CD4-positive, alpha-beta memory T cell (primary cell): ENCODE measurements at regions of chr2 and their contacts with region 1.

Region 1: DNA sequence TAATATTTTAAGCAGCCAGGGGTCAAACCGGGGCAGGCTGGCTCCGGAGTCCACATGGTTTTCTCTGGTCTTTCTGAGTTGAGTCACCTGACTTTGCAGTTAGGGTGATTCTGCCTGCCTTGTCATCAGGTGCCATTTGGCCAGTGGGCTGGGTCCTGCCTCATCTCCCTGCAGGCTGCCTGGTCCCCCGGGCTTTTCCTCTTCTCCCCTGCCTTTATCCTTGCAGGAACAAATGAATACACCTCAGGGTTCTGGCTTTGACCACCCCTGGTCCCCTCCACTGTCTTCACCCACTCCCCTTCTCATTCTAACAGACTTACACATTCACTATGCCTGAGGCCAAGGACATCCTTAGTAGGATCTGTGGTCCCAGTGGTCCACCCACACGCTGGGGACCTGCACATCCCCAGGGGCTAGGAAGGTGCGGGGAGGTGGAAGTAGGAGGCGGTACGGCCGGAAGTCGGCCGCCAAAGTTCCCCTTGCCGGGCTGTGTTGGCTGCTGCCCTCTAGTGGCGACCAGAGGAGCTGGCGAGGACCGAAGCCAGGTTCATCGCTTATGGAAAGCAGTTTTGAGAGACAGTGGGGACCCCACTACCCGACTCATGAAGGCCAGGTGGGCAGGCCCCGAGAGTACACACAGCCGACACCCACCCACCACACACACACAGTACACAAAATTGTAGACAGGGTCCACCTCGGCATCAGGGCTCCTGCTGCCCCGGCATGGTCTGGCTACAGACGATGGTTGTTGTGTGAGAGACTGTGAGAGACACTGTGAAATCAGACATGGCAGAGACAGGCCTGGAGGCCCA is 6.3 kb upstream of the TEX261 start:
- DNase-seq: peak; percentile 76 to 78 (median 76)
- H3K4me3 ChIP-seq: peak overlapping the region in 1 of 2 donors; percentile 13
- H3K4me3 Mint-ChIP-seq: peak overlapping the region; percentile 23 to 75 (median 58)
- H3K27ac ChIP-seq: no peak overlapping the region
- H3K27ac Mint-ChIP-seq: peak overlapping the region in 5 of 7 donors; percentile 24 to 85 (median 66)
- H3K4me1 ChIP-seq: peaks cover 15% of the 10 kb centered on the region
- H3K4me1 Mint-ChIP-seq: peaks cover 4 to 13% (median 11%) of the 10 kb centered on the region in 4 donors
- H3K27me3 ChIP-seq: no peaks in the 10 kb centered on the region
- H3K27me3 Mint-ChIP-seq: peaks cover 1 to 2% of the 10 kb centered on the region in 2 donors

Region 2: DNA sequence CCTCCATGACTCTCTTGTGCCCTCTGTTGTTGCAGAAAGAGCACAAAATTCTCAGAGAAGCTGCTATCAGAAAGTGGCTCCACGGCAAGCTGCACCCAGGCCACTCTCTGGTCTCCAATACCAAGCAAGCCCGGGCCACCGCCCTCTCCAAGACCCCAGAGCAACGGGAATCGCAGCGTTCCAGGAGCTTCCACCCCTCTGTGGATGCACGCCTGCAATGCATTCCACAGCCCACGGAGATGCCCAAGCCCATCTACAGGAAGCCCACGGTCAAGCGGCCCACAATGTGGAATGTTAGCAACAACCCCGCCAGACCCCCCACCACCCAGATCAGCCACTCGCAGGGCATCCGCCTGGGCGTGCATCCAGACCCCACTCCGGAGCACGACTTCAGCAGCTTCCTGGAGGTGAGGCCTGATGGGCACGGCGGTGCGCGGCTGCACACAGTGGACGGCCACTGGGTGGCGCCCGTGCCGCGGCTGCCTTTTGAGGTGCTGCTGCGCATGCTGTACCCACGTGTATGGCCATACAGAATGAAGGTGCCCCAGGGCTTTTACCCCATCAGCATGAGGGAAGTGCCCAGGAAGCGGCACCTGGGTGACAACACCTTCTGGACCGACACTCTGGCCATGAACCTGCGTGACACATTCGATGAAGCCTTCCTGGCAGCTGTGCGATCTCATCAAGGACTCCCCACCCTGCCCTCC is 16.3 kb before region 1 on chr2:
- CTCF ChIA-PET with region 1: interaction called, 75 read pairs
- POLR2A ChIA-PET with region 1: interaction called, 6 read pairs
- intact Hi-C with region 1: loop called (anchors 2 kb)
- DNase-seq: peak; percentile 77 to 80 (median 79)
- H3K4me3 ChIP-seq: no peak overlapping the region
- H3K4me3 Mint-ChIP-seq: peak overlapping the region in 6 of 8 donors; percentile 6 to 51 (median 38)
- H3K27ac ChIP-seq: no peak overlapping the region
- H3K27ac Mint-ChIP-seq: peak overlapping the region in 3 of 7 donors; percentile 9 to 29 (median 27)
- H3K4me1 ChIP-seq: peaks cover 8% of the 10 kb centered on the region
- H3K4me1 Mint-ChIP-seq: peaks cover 9 to 30% (median 15%) of the 10 kb centered on the region in 4 donors
- H3K27me3 ChIP-seq: no peaks in the 10 kb centered on the region
- H3K27me3 Mint-ChIP-seq: no peaks in the 10 kb centered on the region